HEK293 (cell line): ENCODE measurements at regions of chr20 and their contacts with region 1.

Region 1: DNA sequence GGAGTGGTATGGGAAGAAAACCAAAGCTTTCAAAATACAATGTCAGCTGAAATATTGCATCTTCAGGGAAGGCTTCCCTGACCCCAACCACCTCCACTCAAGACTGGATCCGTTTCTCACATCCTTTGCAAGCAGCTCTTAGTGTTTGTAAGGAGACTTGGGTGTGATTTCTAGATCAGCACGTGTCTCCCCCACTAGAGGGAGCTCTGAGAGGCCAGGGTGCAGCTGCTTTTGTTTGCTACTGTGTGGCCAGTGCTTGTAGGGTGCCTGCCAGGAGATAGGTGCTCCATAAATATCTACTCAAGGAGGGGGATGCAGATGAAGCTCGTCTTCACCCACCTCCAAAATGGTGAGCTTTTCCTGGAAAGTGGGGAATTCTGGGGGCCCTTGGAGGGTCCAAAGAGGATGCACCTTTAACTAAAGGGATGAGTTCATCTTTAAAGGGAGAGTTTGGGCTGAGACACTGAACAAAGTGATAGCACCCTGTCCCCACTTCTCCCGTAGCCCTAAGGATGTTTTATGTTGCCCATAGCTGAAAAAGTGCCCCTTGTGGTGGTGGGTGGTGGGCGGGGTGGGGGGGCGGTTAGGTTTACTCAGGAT is 52.6 kb upstream of the MAFB start:
- H3K4me3 ChIP-seq: no peak overlapping the region
- H3K27ac ChIP-seq: no peak overlapping the region
- H3K4me1 ChIP-seq: no peaks in the 10 kb centered on the region; the same call in 1 of the 2 replicates
- CTCF ChIP-seq: peak; percentile 34; the same call in 1 of the 2 replicates

Region 2: DNA sequence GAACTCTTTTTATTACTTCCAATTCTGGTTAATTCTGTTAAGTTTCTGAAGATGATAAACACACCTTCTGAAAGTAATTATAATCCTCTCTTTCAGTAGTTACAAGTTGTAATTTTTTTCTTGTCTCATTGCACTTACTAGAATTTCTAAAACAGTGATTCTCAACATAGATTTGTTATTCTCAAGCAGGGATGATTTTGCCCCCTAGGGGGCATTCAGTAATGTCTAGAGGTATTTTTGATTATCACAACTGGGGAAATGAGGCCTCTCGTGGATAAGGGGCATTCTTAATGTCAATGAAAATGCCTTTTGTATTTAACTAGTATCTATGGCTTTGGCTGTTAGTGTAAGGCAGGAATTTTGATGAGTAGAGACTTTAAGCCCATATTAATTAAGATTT is 13.1 kb before region 1 on chr20:
- CTCF ChIA-PET with region 1: interaction called, 12 read pairs
- POLR2A ChIA-PET with region 1: no interaction called
- H3K4me3 ChIP-seq: no peak overlapping the region
- H3K27ac ChIP-seq: no peak overlapping the region
- H3K4me1 ChIP-seq: no peaks in the 10 kb centered on the region
- CTCF ChIP-seq: no peak

Region 3: DNA sequence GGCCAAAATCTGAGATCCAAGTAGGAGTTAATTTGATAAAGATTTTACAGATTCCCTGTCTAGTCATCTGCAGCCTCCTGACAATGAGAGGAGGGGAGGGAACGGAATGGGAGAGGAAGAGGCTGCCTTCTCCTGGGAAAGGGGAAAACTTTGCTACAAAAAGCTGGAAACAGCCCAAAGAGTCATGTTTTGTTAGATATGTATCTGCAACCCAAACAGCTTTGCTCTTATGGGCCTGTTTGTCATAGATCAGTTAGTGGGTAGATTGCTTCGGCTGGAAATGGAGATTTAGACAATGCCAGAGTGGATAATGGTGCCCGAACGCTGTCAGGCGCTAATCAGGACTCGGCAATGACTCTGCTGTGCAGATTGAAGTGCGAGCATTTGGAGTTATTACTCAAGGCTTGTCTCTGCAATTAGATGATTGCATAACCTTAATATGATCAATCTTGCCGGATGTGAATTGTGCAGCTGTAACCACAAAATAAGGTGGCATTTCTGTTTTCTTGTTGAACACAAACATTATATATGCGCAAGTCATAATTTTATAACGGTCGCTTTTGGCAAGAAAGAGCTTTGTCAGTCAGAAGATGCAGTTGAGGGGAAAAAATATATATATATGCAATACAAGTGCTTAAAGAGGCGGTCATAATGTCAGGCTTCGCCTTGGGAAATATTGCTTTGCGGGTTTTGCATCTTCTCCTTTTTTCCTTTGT is 39.9 kb after region 1 on chr20:
- CTCF ChIA-PET with region 1: interaction called, 10 read pairs
- POLR2A ChIA-PET with region 1: no interaction called
- H3K4me3 ChIP-seq: no peak overlapping the region
- H3K27ac ChIP-seq: no peak overlapping the region
- H3K4me1 ChIP-seq: no peaks in the 10 kb centered on the region
- CTCF ChIP-seq: no peak

Region 4: GRCh38 chr20:40806929-40807820 is 65.6 kb after region 1 on chr20:
- CTCF ChIA-PET with region 1: no interaction called
- POLR2A ChIA-PET with region 1: no interaction called
- H3K4me3 ChIP-seq: no peak overlapping the region
- H3K27ac ChIP-seq: no peak overlapping the region
- H3K4me1 ChIP-seq: no peaks in the 10 kb centered on the region
- CTCF ChIP-seq: no peak

Region 5: DNA sequence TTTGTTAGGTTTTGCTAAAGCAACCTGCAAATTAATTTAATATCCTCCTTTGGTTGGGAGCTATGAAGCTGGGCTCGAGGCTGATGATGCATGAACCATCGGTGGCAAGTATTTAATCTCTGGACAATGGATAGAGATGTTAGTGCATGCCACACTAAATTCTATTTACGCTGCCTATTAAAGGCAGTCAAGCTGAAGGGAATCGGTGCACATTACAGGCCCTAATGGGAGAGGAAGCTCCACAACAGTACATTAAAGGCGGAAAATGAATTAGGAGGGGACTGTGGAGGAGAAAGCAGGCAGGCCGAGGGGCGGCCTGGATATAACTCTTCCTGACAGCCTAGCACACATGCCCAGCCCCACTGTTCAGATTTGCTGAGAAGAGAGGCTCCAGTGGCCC is 79.8 kb after region 1 on chr20:
- CTCF ChIA-PET with region 1: no interaction called
- POLR2A ChIA-PET with region 1: no interaction called
- H3K4me3 ChIP-seq: no peak overlapping the region
- H3K27ac ChIP-seq: no peak overlapping the region
- H3K4me1 ChIP-seq: no peaks in the 10 kb centered on the region
- CTCF ChIP-seq: no peak

Region 6: DNA sequence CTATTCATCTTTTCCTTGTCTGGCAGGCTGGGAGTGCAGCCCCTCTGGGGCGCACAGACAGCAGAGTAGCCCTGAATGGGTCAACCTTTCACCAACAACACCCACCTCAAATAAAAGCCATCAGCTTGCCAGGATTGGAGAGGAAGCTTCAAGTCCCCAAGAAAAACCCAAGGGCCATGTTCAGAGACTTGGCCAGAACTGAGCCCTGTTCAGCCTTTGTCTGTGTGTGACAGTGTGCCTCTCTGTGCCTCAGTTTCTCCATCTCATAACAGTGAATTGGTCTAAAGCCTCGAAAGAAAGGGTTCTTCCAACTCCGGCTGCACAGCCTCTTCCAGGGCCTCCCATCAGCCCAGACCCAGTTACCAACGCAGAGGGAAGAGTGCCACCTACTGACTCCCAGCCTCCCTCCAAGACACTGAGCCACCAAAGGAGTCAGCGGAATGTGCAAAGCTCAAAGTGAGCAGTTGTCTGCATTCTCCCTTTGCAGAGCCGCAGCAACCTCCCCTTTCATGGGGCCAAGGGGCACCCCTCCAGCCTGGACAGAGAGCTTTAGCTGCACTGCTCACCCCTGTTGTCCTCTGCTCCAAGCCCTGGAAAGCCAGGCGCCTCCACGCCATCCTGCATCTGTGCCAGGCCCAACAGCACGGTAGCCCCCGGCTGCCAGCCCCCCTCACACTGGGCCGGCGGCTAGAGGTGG is 204.3 kb after region 1 on chr20:
- CTCF ChIA-PET with region 1: interaction called, 24 read pairs
- POLR2A ChIA-PET with region 1: no interaction called
- H3K4me3 ChIP-seq: no peak overlapping the region
- H3K27ac ChIP-seq: no peak overlapping the region
- H3K4me1 ChIP-seq: no peaks in the 10 kb centered on the region; the same call in 1 of the 2 replicates
- CTCF ChIP-seq: peak; percentile 91

Region 7: DNA sequence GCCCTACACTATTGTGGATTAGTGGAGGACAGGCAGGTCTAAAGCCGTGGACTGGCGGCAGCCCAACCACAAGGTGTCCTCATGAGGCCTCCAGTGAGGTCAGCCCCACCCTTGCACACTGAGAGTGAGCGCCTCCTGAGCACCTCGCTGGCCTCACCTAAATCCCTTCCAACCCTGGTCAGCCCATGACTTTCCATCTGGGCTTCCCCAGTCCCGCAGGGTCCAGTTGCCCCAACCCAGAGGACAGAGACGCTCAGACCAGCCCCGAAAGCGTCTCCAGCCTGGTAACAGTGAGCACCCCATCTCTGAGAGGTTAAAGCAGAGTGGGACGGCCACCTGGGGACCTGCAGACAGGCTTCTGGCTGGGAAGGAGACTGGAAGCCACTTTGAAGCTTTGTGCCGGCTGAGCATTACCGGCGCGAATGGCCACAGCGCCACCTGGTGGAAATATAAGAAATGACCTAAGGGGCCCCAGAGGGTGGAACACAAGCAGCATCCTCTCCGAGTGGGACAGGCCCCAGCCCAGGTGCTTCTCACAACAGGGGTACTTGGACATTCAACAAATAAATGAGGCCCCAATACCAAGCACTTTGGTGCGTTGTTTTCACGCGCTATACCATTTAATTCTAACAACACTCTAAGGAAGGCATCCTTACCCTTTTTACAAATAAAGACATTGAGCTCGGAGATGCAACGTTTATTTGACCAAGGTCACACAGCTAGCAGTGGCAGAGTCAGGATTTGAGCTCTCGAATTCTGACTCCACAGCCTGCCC is 221.3 kb after region 1 on chr20:
- CTCF ChIA-PET with region 1: interaction called, 44 read pairs
- POLR2A ChIA-PET with region 1: no interaction called
- H3K4me3 ChIP-seq: no peak overlapping the region
- H3K27ac ChIP-seq: no peak overlapping the region
- H3K4me1 ChIP-seq: no peaks in the 10 kb centered on the region
- CTCF ChIP-seq: peak; percentile 82